Activated CD4-positive, alpha-beta T cell treated with anti-CD3 and anti-CD28 coated beads for 36 hours (primary cell): ENCODE measurements at regions of chr19 and their contacts with region 1.

Region 1: DNA sequence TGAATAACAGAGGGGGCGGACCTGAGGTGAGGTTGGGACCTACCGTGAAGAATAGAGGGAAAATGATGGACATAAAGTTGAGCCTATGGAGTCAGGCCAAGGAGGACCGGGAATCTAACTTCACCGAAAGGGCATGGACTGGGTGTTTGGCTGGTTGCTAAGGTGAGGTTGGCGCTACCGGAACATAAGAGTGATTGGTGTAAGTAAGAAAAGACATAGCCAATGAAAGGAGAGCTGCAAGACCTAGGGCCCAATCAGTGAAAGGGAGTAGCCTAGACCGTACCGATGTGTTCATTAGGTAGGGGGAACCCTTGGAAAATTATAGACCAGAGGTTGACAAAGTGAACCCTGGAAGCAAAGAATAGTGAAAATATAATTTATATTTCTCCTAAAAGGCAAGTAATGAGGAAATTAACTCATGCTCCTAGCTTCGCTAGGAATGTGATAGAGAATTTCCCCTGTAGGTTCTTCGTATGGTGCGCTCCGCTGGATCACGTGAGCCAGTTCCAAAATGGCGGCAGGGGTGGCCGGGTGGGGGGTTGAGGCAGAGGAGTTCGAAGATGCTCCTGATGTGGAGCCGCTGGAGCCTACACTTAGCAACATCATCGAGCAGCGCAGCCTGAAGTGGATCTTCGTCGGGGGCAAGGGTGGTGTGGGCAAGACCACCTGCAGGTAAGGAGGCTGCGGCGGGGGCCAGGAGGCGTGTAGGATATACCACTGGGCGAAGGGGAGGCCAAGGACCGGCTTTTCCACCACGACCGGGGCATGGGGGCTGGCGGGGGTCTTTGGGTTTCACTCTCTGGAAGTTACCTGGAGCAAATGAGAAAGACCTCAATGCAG is at the start of gene GET3:
- DNase-seq: peak; percentile 89
- ATAC-seq: peak; percentile 88
- H3K4me3 Mint-ChIP-seq: peak within 1 kb of the TSS; percentile 98
- H3K27ac Mint-ChIP-seq: peak within 1 kb of the TSS; percentile 94
- H3K4me1 Mint-ChIP-seq: peaks cover 32% of the 10 kb centered on the region
- H3K27me3 Mint-ChIP-seq: no peaks in the 10 kb centered on the region
- total RNA-seq, gene GET3: 53.7 to 61.9 TPM

Region 2: DNA sequence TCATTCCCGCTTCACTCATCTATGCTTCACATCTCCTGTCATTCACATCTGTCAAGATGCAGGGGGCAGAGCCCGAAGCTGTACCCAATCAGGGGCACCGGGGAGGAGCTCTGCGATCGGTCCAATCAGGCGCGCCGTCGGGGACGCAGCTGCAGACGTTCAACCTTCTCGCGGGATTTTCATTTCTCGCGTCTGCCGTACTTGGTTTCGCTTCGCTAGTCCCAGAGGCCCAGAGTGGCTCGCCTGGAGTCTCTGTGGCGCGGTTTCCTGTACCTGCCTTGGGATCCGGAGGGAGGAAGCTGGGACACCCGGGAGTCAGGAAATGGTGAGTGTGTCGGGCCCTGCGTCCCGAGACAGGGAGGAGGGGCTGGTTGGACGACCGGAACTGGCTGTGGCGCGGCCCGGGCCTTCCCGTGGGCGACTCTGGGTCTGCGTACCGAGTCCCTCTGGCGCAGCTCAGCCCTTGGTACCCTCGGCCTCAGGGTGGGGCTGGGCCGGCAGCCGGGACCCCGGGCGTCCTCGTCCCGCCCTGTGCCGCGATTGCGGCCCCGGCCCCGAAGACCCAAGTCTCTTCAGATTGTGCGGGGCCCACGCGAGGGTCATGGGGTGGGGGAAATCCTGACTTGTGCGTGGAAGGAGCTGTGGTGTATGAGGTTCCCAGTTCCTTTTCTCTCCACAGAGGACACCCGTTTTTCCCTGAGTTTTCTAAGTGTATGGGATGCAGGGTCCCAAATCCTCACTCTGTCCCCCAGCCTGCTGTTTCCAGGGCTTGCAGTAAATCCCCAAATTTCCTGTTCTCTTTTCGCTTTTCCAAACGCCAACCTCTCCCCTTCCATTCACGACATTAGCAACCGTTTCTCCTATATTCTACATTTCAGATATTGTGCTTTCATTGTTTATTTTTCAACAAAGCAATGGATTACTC is 574.1 kb before region 1 on chr19 and contains the start of gene ZNF136:
- CTCF ChIA-PET with region 1: no interaction called
- POLR2A ChIA-PET with region 1: no interaction called
- intact Hi-C with region 1: loop called in 1 of 2 experiments (anchors 5 kb)
- DNase-seq: peak; percentile 97
- ATAC-seq: peak; percentile 100
- H3K4me3 Mint-ChIP-seq: peak within 1 kb of the TSS; percentile 98
- H3K27ac Mint-ChIP-seq: peak within 1 kb of the TSS; percentile 99
- H3K4me1 Mint-ChIP-seq: peaks cover 38% of the 10 kb centered on the region
- H3K27me3 Mint-ChIP-seq: no peaks in the 10 kb centered on the region
- total RNA-seq, gene ZNF136: 11.7 to 12.9 TPM

Region 3: GRCh38 chr19:12666265-12667048 is 70.8 kb before region 1 on chr19 and contains the starts of genes MAN2B1 and WDR83:
- CTCF ChIA-PET with region 1: interaction called, 3 read pairs
- POLR2A ChIA-PET with region 1: interaction called, 5 read pairs
- intact Hi-C with region 1: loop called in 1 of 2 experiments (anchors 1 kb)
- DNase-seq: peak; percentile 90
- ATAC-seq: peak; percentile 73
- H3K4me3 Mint-ChIP-seq: peak within 1 kb of the TSS; percentile 86
- H3K27ac Mint-ChIP-seq: peak within 1 kb of the TSS; percentile 83
- H3K4me1 Mint-ChIP-seq: peaks cover 43% of the 10 kb centered on the region
- H3K27me3 Mint-ChIP-seq: no peaks in the 10 kb centered on the region
- total RNA-seq, gene MAN2B1: 118 to 154 TPM
- total RNA-seq, gene WDR83: 13.5 to 19.5 TPM

Region 4: DNA sequence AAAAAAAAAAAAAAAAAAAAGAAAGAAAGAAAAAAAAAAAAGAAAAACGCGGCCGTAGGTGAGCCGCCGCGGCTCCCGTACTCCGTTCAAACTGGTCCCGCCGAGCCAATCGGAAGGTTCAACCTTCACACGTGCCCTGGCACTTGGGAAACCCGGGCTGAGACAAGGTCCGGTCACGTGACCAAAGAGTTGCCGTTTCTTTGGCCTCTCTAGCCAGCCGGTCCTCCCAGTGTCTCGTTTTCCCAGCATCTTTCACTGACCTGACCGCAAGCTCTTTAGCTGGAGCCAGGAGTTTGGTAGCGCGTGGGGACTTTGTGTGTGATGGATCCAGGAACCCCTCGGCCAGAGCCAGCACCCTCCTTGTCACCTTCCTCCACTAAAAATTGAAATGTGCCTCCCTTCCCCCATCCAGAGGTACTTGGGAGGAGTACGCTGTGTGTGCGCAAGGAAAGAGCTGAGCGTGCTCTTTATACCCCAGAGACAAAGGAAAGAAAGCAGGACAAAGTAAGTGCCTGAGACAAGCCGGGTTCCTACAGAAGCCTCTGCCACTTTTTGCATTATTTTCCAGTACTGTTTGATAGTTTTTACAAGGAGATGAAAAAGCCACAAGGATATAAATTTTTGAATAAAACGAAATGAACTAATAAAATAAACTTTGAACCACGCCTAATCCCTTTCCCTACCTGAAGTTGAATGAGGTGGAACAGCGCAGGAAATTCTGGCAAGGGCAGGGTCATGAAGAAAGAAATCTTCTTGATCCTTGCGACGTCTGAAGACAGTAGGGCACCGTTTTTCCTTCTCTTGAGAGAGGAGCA is 14.4 kb before region 1 on chr19:
- CTCF ChIA-PET with region 1: interaction called, 36 read pairs
- POLR2A ChIA-PET with region 1: interaction called, 48 read pairs
- intact Hi-C with region 1: loop called (anchors 1 kb)
- DNase-seq: peak; percentile 97
- ATAC-seq: peak; percentile 84
- H3K4me3 Mint-ChIP-seq: peak overlapping the region; percentile 99
- H3K27ac Mint-ChIP-seq: peak overlapping the region; percentile 90
- H3K4me1 Mint-ChIP-seq: peaks cover 35% of the 10 kb centered on the region
- H3K27me3 Mint-ChIP-seq: no peaks in the 10 kb centered on the region

Region 5: GRCh38 chr19:12777217-12778016 is 40.2 kb after region 1 on chr19:
- CTCF ChIA-PET with region 1: interaction called, 4 read pairs
- POLR2A ChIA-PET with region 1: no interaction called
- intact Hi-C with region 1: loop called in 1 of 2 experiments (anchors 1 kb)
- DNase-seq: peak; percentile 90
- ATAC-seq: peak; percentile 24
- H3K4me3 Mint-ChIP-seq: peak overlapping the region; percentile 82
- H3K27ac Mint-ChIP-seq: peak overlapping the region; percentile 95
- H3K4me1 Mint-ChIP-seq: peaks cover 45% of the 10 kb centered on the region
- H3K27me3 Mint-ChIP-seq: no peaks in the 10 kb centered on the region

Region 6: GRCh38 chr19:12796146-12797071 is 59.2 kb after region 1 on chr19:
- CTCF ChIA-PET with region 1: interaction called, 16 read pairs
- POLR2A ChIA-PET with region 1: interaction called, 9 read pairs
- intact Hi-C with region 1: loop called (anchors 1 to 5 kb)
- DNase-seq: peak; percentile 87
- ATAC-seq: peak; percentile 14
- H3K4me3 Mint-ChIP-seq: peak overlapping the region; percentile 63
- H3K27ac Mint-ChIP-seq: peak overlapping the region; percentile 84
- H3K4me1 Mint-ChIP-seq: peaks cover 35% of the 10 kb centered on the region
- H3K27me3 Mint-ChIP-seq: no peaks in the 10 kb centered on the region

Region 7: DNA sequence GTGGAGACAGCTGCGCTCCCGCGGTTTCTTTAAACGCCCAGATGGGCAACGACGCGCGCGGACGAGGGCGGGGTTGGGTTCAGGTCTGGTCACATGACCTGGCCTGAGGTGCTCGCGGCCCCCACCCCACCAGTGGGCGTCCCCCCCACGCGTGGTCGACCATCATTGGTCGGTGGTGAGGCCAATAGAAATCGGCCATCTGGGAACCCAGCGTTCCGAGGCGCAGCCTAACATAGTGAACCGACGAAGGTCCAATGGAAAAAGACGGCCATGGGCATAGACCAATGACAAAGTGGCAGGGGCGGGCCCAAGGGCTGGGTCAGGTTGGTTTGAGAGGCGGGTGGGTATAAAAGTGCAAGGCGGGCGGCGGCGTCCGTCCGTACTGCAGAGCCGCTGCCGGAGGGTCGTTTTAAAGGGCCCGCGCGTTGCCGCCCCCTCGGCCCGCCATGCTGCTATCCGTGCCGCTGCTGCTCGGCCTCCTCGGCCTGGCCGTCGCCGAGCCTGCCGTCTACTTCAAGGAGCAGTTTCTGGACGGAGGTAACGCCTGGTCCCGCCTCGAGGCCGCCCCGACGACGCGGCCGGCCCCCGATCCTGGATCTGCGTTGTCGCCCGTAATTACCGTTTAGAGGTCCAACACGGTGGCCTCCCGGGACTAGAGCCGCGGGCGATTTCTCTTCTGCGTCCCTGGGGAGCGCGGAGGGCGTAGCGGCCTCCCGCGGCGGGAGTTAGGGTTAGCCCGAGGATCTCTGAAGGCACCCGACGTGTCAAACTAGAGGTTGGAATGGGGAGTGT is 201.2 kb after region 1 on chr19 and contains the start of gene CALR:
- CTCF ChIA-PET with region 1: no interaction called
- POLR2A ChIA-PET with region 1: no interaction called
- intact Hi-C with region 1: loop called in 1 of 2 experiments (anchors 1 kb)
- DNase-seq: peak; percentile 99
- ATAC-seq: peak; percentile 89
- H3K4me3 Mint-ChIP-seq: peak within 1 kb of the TSS; percentile 99
- H3K27ac Mint-ChIP-seq: peak within 1 kb of the TSS; percentile 96
- H3K4me1 Mint-ChIP-seq: peaks cover 59% of the 10 kb centered on the region
- H3K27me3 Mint-ChIP-seq: no peaks in the 10 kb centered on the region
- total RNA-seq, gene CALR: 557 to 569 TPM